MCF 10A (cell line): ENCODE measurements at regions of chr6 and their contacts with region 1.

Region 1: GRCh38 chr6:113879186-113880096 is 22.3 kb downstream of the MARCKS start:
- DNase-seq: peak; percentile 80
- H3K4me3 Mint-ChIP-seq: no peak overlapping the region
- H3K27ac Mint-ChIP-seq: no peak overlapping the region
- H3K4me1 Mint-ChIP-seq: peaks cover 7% of the 10 kb centered on the region
- H3K27me3 Mint-ChIP-seq: no peaks in the 10 kb centered on the region
- CTCF ChIP-seq: peak; percentile 80

Region 2: GRCh38 chr6:112337209-112337638 is 1542.2 kb before region 1 on chr6:
- CTCF ChIA-PET with region 1: no interaction called
- POLR2A ChIA-PET with region 1: interaction called, 3 read pairs
- intact Hi-C with region 1: loop called (anchors 1 kb)
- DNase-seq: peak; percentile 77
- H3K4me3 Mint-ChIP-seq: no peak overlapping the region
- H3K27ac Mint-ChIP-seq: no peak overlapping the region
- H3K4me1 Mint-ChIP-seq: peaks cover 3% of the 10 kb centered on the region
- H3K27me3 Mint-ChIP-seq: no peaks in the 10 kb centered on the region
- CTCF ChIP-seq: peak; percentile 70

Region 3: GRCh38 chr6:112879920-112880413 is 999.5 kb before region 1 on chr6:
- CTCF ChIA-PET with region 1: interaction called, 4 read pairs
- POLR2A ChIA-PET with region 1: no interaction called
- intact Hi-C with region 1: loop called (anchors 10 kb)
- DNase-seq: no peak
- H3K4me3 Mint-ChIP-seq: no peak overlapping the region
- H3K27ac Mint-ChIP-seq: no peak overlapping the region
- H3K4me1 Mint-ChIP-seq: peaks cover 6% of the 10 kb centered on the region
- H3K27me3 Mint-ChIP-seq: no peaks in the 10 kb centered on the region
- CTCF ChIP-seq: no peak

Region 4: DNA sequence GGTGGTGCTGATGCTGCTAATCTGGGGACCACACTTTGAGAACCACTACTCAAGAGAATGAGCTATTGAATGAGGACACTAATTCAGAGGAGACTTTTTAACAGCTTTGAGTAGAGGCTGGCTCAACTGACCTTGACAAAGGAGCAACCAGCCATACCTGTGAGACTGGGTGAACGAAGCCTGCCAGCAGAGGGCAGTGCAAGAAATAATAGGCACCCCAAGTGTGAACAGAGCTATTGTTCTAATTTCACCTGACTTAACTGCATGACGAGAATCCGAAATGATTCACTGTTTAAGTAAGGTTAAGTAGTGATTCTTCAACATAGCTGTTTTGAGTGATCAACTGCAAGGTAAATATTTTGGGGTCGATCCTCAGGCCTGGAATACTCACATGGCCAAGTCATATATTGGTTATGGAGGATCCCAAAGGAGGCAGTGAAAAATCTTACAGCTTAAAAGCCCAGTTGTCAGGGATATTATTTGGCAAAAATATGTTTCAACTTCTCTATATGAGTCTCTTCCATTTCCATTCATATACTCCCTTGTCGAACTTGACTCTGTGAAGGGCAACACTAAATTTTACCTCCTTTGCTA is 572.8 kb before region 1 on chr6:
- CTCF ChIA-PET with region 1: interaction called, 9 read pairs
- POLR2A ChIA-PET with region 1: interaction called, 3 read pairs
- intact Hi-C with region 1: loop called (anchors 1 kb)
- DNase-seq: peak; percentile 81
- H3K4me3 Mint-ChIP-seq: no peak overlapping the region
- H3K27ac Mint-ChIP-seq: no peak overlapping the region
- H3K4me1 Mint-ChIP-seq: no peaks in the 10 kb centered on the region
- H3K27me3 Mint-ChIP-seq: no peaks in the 10 kb centered on the region
- CTCF ChIP-seq: peak; percentile 78

Region 5: GRCh38 chr6:113414511-113414910 is 464.9 kb before region 1 on chr6:
- CTCF ChIA-PET with region 1: interaction called, 12 read pairs
- POLR2A ChIA-PET with region 1: no interaction called
- intact Hi-C with region 1: loop called (anchors 5 kb)
- DNase-seq: peak; percentile 79
- H3K4me3 Mint-ChIP-seq: no peak overlapping the region
- H3K27ac Mint-ChIP-seq: no peak overlapping the region
- H3K4me1 Mint-ChIP-seq: peaks cover 22% of the 10 kb centered on the region
- H3K27me3 Mint-ChIP-seq: no peaks in the 10 kb centered on the region
- CTCF ChIP-seq: peak; percentile 53

Region 6: GRCh38 chr6:113591896-113592827 is 287.3 kb before region 1 on chr6:
- CTCF ChIA-PET with region 1: no interaction called
- POLR2A ChIA-PET with region 1: no interaction called
- intact Hi-C with region 1: loop called (anchors 5 kb)
- DNase-seq: peak; percentile 34
- H3K4me3 Mint-ChIP-seq: no peak overlapping the region
- H3K27ac Mint-ChIP-seq: no peak overlapping the region
- H3K4me1 Mint-ChIP-seq: no peaks in the 10 kb centered on the region
- H3K27me3 Mint-ChIP-seq: no peaks in the 10 kb centered on the region
- CTCF ChIP-seq: no peak

Region 7: GRCh38 chr6:113909234-113909856 is 29.9 kb after region 1 on chr6:
- CTCF ChIA-PET with region 1: interaction called, 20 read pairs
- POLR2A ChIA-PET with region 1: interaction called, 4 read pairs
- intact Hi-C with region 1: no loop called
- DNase-seq: peak; percentile 61
- H3K4me3 Mint-ChIP-seq: no peak overlapping the region
- H3K27ac Mint-ChIP-seq: no peak overlapping the region
- H3K4me1 Mint-ChIP-seq: no peaks in the 10 kb centered on the region
- H3K27me3 Mint-ChIP-seq: no peaks in the 10 kb centered on the region
- CTCF ChIP-seq: peak; percentile 53